A549 (cell line): ENCODE measurements at regions of chr15 and their contacts with region 1.

Region 1: GRCh38 chr15:38252481-38253412 is at the start of gene SPRED1:
- DNase-seq: no peak
- ATAC-seq: peak; percentile 70 to 74
- H3K4me3 ChIP-seq: peak within 1 kb of the TSS; percentile 91
- H3K27ac ChIP-seq: peak within 1 kb of the TSS; percentile 97 to 99
- H3K4me1 ChIP-seq: peaks cover 32% of the 10 kb centered on the region
- CTCF ChIP-seq: no peak
- EP300 ChIP-seq: no peak
- POLR2A ChIP-seq: no peak
- RAD21 ChIP-seq: no peak; a peak in 1 of 5 replicates
- polyA plus RNA-seq, gene SPRED1: 6.1 and 8.6 TPM in 2 replicates

Region 2: GRCh38 chr15:38072348-38073177 is 180.2 kb before region 1 on chr15:
- CTCF ChIA-PET with region 1: no interaction called
- POLR2A ChIA-PET with region 1: interaction called, 52 read pairs
- DNase-seq: peak; percentile 39 to 81
- ATAC-seq: peak; percentile 90 to 91
- H3K4me3 ChIP-seq: peak overlapping the region; percentile 52
- H3K27ac ChIP-seq: peak overlapping the region; percentile 84 to 88
- H3K4me1 ChIP-seq: peaks cover 25% of the 10 kb centered on the region
- CTCF ChIP-seq: peak; percentile 17; the same call in 1 of the 3 replicates
- EP300 ChIP-seq: no peak
- POLR2A ChIP-seq: peak; percentile 21; the same call in 1 of the 2 replicates
- RAD21 ChIP-seq: peak; percentile 30 to 37

Region 3: DNA sequence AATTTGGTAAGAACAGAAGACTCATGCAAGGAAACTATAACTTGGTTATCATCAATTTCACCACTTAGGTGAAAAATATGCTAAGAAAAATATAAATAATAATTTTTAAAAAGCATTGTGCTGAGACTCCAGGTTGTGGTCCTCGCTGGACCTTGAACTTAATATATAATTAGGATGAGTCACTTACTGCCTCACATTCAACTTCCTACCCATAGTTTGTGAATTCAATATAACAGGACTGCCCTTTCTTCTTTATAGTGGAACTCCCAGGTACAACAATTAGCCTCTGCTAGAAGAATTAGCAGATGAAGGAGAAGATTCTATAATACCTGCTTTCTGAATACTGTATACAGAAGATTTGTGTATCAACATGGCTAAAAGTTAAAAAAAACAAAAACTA is 149.2 kb before region 1 on chr15:
- CTCF ChIA-PET with region 1: no interaction called
- POLR2A ChIA-PET with region 1: no interaction called
- DNase-seq: no peak
- ATAC-seq: no peak
- H3K4me3 ChIP-seq: no peak overlapping the region
- H3K27ac ChIP-seq: no peak overlapping the region
- H3K4me1 ChIP-seq: no peaks in the 10 kb centered on the region
- CTCF ChIP-seq: no peak
- EP300 ChIP-seq: no peak
- POLR2A ChIP-seq: no peak
- RAD21 ChIP-seq: no peak

Region 4: GRCh38 chr15:38130740-38131498 is 121.8 kb before region 1 on chr15:
- CTCF ChIA-PET with region 1: no interaction called
- POLR2A ChIA-PET with region 1: interaction called, 10 read pairs
- DNase-seq: no peak
- ATAC-seq: no peak
- H3K4me3 ChIP-seq: no peak overlapping the region
- H3K27ac ChIP-seq: no peak overlapping the region
- H3K4me1 ChIP-seq: peaks cover 5% of the 10 kb centered on the region; the same call in 1 of the 3 replicates
- CTCF ChIP-seq: no peak
- EP300 ChIP-seq: no peak
- POLR2A ChIP-seq: no peak
- RAD21 ChIP-seq: no peak

Region 5: GRCh38 chr15:38168467-38169070 is 84.2 kb before region 1 on chr15:
- CTCF ChIA-PET with region 1: no interaction called
- POLR2A ChIA-PET with region 1: no interaction called
- DNase-seq: no peak
- ATAC-seq: no peak
- H3K4me3 ChIP-seq: no peak overlapping the region
- H3K27ac ChIP-seq: no peak overlapping the region
- H3K4me1 ChIP-seq: 0 out of 3 replicates have a peak, but pooled peaks cover 5% of the 10 kb centered on the region
- CTCF ChIP-seq: no peak
- EP300 ChIP-seq: no peak
- POLR2A ChIP-seq: no peak
- RAD21 ChIP-seq: no peak

Region 6: DNA sequence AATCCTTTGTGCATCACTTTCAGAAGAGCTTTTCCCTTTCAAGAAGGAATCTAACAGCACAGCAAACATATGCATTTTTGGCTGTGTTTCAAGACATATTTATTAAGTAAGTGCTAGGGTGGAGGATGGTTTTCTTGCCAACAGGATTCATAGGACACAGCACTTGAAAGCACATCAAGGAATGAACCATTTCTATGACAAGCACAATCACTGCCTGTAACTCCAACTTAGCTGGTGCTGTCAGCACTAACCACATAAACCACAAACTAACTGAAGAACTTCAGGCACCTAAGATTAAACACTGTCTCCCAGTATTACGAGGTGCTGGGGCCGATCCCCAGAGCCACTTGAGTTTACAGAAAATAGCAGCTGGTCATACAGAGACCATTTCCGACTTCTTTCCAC is 35.6 kb before region 1 on chr15:
- CTCF ChIA-PET with region 1: no interaction called
- POLR2A ChIA-PET with region 1: interaction called, 20 read pairs
- DNase-seq: peak in 1 of 2 experiments; percentile 33
- ATAC-seq: peak; percentile 30 to 51; a peak in 4 of 6 replicates
- H3K4me3 ChIP-seq: no peak overlapping the region
- H3K27ac ChIP-seq: peak overlapping the region; percentile 63 to 72
- H3K4me1 ChIP-seq: peaks cover 43% of the 10 kb centered on the region
- CTCF ChIP-seq: no peak
- EP300 ChIP-seq: no peak
- POLR2A ChIP-seq: no peak
- RAD21 ChIP-seq: no peak

Region 7: GRCh38 chr15:38226608-38227266 is 26.0 kb before region 1 on chr15:
- CTCF ChIA-PET with region 1: interaction called, 4 read pairs
- POLR2A ChIA-PET with region 1: interaction called, 32 read pairs
- DNase-seq: peak; percentile 36 to 76
- ATAC-seq: peak; percentile 73 to 89
- H3K4me3 ChIP-seq: no peak overlapping the region
- H3K27ac ChIP-seq: no peak overlapping the region; a peak in 1 of 6 replicates
- H3K4me1 ChIP-seq: peaks cover 14% of the 10 kb centered on the region
- CTCF ChIP-seq: no peak
- EP300 ChIP-seq: no peak
- POLR2A ChIP-seq: no peak
- RAD21 ChIP-seq: no peak

Region 8: DNA sequence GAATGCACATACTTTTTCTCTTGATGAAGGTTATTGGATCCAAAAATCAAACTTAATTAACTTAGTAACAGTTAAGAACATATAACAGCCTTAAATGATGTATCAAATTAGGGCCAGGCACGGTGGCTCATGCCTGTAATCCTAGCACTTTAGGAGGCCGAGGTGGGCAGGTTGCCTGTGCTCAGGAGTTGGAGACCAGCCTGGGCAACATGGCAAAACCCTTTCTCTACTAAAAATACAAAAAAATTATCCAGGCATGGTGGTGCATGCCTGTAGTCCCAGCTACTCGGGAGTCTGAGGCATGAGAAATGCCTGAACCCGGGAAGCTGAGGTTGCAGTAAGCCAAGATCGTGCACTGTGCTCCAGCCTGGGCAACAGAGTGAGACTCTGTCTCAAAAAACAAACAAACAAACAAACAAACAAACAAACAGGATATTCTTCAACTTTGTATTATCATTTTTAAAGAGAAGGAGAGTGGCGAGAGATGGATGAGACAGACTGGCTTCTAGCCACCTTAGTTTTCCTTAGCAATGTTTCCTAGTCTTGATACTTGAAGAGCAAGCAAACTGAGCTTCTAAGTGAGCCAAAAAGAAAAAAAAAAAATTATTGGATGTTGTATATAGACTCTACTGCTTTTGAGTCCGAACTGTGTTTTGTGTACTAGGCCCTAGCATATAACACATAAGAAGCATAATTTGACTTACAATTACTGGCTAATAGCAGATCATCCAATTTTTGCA is 13.7 kb after region 1 on chr15:
- CTCF ChIA-PET with region 1: interaction called, 10 read pairs
- POLR2A ChIA-PET with region 1: interaction called, 10 read pairs
- DNase-seq: no peak
- ATAC-seq: no peak
- H3K4me3 ChIP-seq: no peak overlapping the region
- H3K27ac ChIP-seq: no peak overlapping the region
- H3K4me1 ChIP-seq: peaks cover 10% of the 10 kb centered on the region
- CTCF ChIP-seq: no peak
- EP300 ChIP-seq: no peak
- POLR2A ChIP-seq: no peak
- RAD21 ChIP-seq: no peak